Mammary epithelial cell (primary cell): ENCODE measurements at regions of chr17 and their contacts with region 1.

Region 1: DNA sequence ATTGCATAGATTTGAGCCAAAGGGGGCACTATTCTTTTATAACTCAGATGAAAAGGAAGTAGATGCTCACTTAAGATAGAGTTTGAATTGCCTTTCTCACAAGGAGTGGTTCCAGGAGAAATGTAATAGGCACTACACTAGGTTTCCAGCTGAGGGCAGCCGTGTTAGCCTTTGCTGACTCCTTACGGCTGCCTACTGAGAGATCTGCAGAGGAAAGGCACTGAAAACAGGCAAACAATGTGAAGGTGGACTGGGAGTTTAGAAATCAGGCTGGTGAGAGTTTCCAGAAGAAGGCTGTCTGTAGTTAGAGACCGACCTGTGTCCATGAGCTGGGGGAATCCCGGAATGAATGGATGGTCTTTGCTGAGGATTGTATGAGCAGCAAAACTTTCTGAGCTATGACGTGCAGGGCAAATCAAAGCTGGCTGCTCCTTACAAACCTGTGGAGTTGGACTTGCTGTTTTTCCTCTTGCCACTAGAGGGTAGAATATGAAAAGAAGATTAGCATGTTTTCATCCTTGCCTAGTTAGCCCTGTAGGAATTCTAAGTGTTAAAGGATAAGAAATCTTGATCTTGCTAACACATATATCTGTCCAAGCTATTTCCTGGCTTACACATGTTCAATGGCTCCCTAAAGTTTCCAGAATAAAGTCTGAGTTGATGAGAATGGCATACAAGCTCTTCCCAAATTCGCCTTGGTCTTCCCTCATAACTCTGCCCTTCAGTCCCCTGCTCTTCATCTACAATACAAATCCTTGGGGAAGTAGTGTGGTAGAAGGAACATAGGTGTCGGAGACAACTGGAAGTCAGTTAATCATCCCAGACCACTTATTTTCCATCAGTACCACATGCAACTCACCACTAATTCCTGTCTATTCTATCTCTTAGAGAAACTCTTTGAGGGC is 20.1 kb upstream of the TAOK1 start:
- DNase-seq: peak; percentile 75
- H3K4me3 ChIP-seq: peak overlapping the region in 1 of 3 experiments; percentile 13
- H3K27ac ChIP-seq: peak overlapping the region; percentile 16
- H3K4me1 ChIP-seq: peaks cover 3% of the 10 kb centered on the region
- H3K27me3 ChIP-seq: no peaks in the 10 kb centered on the region
- CTCF ChIP-seq: peak; percentile 74 to 80

Region 2: GRCh38 chr17:29124117-29124924 is 245.8 kb before region 1 on chr17:
- CTCF ChIA-PET with region 1: interaction called, 3 read pairs
- dilution Hi-C with region 1: no loop called
- in situ Hi-C with region 1: no loop called
- intact Hi-C with region 1: loop called (anchors 1 kb)
- DNase-seq: peak; percentile 68
- H3K4me3 ChIP-seq: no peak overlapping the region
- H3K27ac ChIP-seq: no peak overlapping the region
- H3K4me1 ChIP-seq: peaks cover 3% of the 10 kb centered on the region
- H3K27me3 ChIP-seq: no peaks in the 10 kb centered on the region
- CTCF ChIP-seq: peak; percentile 70 to 78

Region 3: DNA sequence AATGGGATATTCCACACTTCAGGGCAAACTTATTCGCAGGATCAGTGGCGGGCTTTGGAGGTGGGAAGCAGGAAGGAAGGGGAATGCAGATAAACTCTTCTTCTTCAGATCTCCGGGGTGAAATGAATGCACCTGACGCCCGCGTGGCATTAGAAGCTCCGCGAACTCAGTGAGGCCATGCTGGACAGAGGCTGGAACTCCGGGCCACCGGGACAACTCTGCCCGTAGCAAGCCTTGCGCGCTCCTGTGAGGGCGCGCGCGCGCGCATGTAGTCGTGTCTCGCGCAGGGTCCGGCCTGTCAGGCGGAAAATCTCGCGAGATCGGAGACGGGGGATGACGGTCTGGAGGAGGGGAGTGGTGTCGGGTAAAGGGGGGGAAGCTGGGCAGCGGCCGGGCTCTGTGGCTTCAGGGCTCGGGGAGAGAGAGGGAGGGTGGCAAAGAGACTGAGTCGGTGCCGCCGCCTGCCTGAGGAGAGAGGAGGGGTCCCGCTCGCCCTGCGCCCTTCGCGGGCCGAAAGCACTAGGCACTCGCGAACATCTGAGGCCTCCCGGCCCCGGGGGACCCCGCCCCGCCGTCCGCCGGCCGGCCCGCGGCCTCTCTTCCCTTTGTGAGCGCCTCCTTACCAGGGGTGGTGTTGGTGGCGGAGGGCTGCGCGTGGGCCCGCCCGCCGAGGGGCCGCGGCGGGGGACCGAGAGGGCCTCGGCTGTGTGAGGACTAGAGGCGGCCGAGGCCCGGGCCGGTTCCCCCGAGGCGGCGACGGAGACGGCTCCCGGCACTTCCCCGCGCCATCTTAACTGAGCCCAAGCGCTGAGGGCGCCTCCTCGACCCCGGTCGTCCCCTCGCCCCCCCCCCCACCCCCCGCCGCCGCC is 20.1 kb after region 1 on chr17 and contains the start of gene TAOK1:
- CTCF ChIA-PET with region 1: interaction called, 4 read pairs
- dilution Hi-C with region 1: no loop called
- in situ Hi-C with region 1: no loop called
- intact Hi-C with region 1: loop called (anchors 2 kb)
- DNase-seq: peak; percentile 96
- H3K4me3 ChIP-seq: peak within 1 kb of the TSS; percentile 68 to 92 (median 79)
- H3K27ac ChIP-seq: peak within 1 kb of the TSS; percentile 93
- H3K4me1 ChIP-seq: no peaks in the 10 kb centered on the region
- H3K27me3 ChIP-seq: no peaks in the 10 kb centered on the region
- CTCF ChIP-seq: no peak
- total RNA-seq, gene TAOK1: 57.5 to 70.0 TPM

Region 4: GRCh38 chr17:29533976-29534375 is 163.9 kb after region 1 on chr17:
- CTCF ChIA-PET with region 1: interaction called, 23 read pairs
- dilution Hi-C with region 1: no loop called
- in situ Hi-C with region 1: no loop called
- intact Hi-C with region 1: loop called (anchors 1 kb)
- DNase-seq: no peak
- H3K4me3 ChIP-seq: no peak overlapping the region
- H3K27ac ChIP-seq: no peak overlapping the region
- H3K4me1 ChIP-seq: no peaks in the 10 kb centered on the region
- H3K27me3 ChIP-seq: no peaks in the 10 kb centered on the region
- CTCF ChIP-seq: no peak

Region 5: GRCh38 chr17:29568331-29569244 is 198.5 kb after region 1 on chr17 and contains the start of gene TP53I13:
- CTCF ChIA-PET with region 1: interaction called, 4 read pairs
- dilution Hi-C with region 1: no loop called
- in situ Hi-C with region 1: loop called in 1 of 2 experiments (anchors 25 kb)
- intact Hi-C with region 1: loop called (anchors 1 kb)
- DNase-seq: peak; percentile 74
- H3K4me3 ChIP-seq: peak within 1 kb of the TSS; percentile 71 to 86 (median 74)
- H3K27ac ChIP-seq: peak within 1 kb of the TSS; percentile 10
- H3K4me1 ChIP-seq: peaks cover 27% of the 10 kb centered on the region
- H3K27me3 ChIP-seq: no peaks in the 10 kb centered on the region
- CTCF ChIP-seq: no peak
- total RNA-seq, gene TP53I13: 26.5 to 31.8 TPM

Region 6: DNA sequence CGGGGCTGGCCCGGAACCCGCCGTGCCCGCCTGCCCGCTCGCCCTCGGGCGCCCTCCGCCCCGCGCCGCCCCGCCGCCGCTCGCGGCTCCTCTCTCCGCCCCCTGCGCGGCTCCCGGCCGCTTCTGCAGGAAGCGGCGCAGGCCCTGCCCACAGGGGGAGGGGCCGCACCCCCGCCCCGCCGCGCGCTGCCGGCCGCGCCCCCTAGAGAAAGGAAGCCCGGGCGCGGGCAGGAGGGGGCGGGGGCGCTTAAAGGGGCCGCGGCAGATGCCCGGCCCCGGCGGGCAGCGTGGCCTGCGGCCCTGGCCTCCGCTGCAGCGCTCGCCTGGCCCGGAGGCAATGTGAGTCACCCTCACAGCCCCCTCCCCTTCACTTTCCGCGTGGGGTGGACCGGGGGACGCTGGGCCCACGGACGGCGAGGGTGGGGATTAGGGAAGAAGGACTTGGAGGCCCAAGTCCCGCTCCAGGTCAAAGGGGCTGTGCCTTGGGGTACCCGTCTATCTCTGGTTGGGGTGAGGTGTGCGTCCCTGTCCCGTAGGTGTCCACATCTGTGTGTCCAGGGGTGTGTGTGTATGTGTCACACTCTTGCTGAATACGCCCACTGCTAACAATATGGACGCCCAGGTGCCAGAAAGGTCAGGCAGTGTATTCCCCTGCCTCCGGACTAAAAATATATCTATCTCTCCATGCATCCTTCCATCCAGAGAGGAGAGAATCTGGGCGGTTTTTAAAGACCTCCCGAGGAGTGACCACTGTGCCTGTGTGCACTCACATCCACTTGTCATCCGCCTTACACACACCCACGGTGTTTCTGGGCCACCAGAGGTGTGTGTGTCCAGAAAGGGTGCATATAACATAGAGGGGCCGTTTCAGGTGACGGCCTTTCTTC is 219.7 kb after region 1 on chr17 and contains the start of gene GIT1:
- CTCF ChIA-PET with region 1: interaction called, 17 read pairs
- dilution Hi-C with region 1: no loop called
- in situ Hi-C with region 1: no loop called
- intact Hi-C with region 1: loop called (anchors 1 kb)
- DNase-seq: peak; percentile 81
- H3K4me3 ChIP-seq: peak within 1 kb of the TSS; percentile 59 to 91 (median 75)
- H3K27ac ChIP-seq: peak within 1 kb of the TSS; percentile 39
- H3K4me1 ChIP-seq: peaks cover 74% of the 10 kb centered on the region
- H3K27me3 ChIP-seq: no peaks in the 10 kb centered on the region
- CTCF ChIP-seq: no peak
- total RNA-seq, gene GIT1: 41.8 to 83.4 TPM

Region 7: GRCh38 chr17:29617125-29617480 is 247.0 kb after region 1 on chr17:
- CTCF ChIA-PET with region 1: interaction called, 8 read pairs
- dilution Hi-C with region 1: no loop called
- in situ Hi-C with region 1: no loop called
- intact Hi-C with region 1: loop called (anchors 2 kb)
- DNase-seq: no peak
- H3K4me3 ChIP-seq: no peak overlapping the region
- H3K27ac ChIP-seq: no peak overlapping the region
- H3K4me1 ChIP-seq: peaks cover 51% of the 10 kb centered on the region
- H3K27me3 ChIP-seq: no peaks in the 10 kb centered on the region
- CTCF ChIP-seq: peak; percentile 31 to 45